B cell (primary cell): ENCODE measurements at regions of chr7 and their contacts with region 1.

Region 1: GRCh38 chr7:90595801-90596671 is at the start of gene CDK14:
- DNase-seq: peak; percentile 93
- ATAC-seq: peak; percentile 68
- H3K4me3 ChIP-seq: peak within 1 kb of the TSS; percentile 72 to 91 (median 84)
- H3K4me3 Mint-ChIP-seq: peak within 1 kb of the TSS; percentile 100
- H3K27ac ChIP-seq: peak within 1 kb of the TSS; percentile 79 to 93
- H3K27ac Mint-ChIP-seq: peak within 1 kb of the TSS; percentile 99
- H3K4me1 ChIP-seq: peaks cover 40 to 45% of the 10 kb centered on the region in 2 donors
- H3K4me1 Mint-ChIP-seq: peaks cover 58% of the 10 kb centered on the region
- H3K27me3 ChIP-seq: no peaks in the 10 kb centered on the region
- H3K27me3 Mint-ChIP-seq: no peaks in the 10 kb centered on the region
- CTCF ChIP-seq: peak; percentile 71
- total RNA-seq, gene CDK14: 167 and 174 TPM in 2 replicates

Region 2: DNA sequence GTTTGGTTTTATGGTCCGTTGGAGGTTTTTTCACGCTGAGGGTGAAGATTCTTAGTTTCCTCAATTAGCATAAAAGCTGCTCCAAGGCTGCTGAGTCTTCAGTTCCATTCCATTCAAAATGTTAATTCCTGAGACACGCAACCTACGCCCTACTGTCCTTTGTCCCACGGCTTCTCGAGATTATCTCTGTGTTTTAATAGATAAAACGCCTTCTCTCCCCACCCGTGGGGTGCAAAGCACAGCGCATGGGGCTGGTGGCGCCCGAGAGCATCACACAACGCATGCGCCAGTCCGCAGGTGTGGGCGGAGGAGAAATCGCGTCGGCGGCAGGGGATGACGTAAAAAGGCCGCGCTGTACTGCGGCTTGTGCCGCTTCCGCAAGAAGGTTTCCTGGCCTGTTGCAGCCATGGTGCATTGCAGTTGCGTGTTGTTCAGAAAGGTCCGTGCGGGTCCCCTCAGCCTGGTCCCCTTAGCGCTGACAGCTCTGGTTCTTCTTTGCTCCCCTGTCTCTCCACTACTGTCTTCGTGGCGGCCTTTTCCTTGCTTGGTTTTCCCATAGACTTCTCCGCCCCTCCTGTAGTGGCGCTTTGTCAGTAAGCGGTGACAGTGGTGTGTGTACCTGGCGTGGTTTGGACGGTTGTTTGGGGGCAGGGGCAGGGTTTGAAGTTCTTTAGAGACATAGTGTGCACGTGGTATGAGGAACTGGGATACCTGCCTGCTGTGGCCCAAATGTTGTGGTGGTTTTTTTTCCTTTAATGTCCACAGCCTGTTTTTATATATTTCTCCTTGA is 249.5 kb before region 1 on chr7 and contains the start of gene GTPBP10:
- CTCF ChIA-PET with region 1: no interaction called
- POLR2A ChIA-PET with region 1: no interaction called
- intact Hi-C with region 1: loop called (anchors 5 kb)
- DNase-seq: peak; percentile 98
- ATAC-seq: peak; percentile 94
- H3K4me3 ChIP-seq: peak within 1 kb of the TSS; percentile 67 to 93 (median 86)
- H3K4me3 Mint-ChIP-seq: peak within 1 kb of the TSS; percentile 99
- H3K27ac ChIP-seq: peak within 1 kb of the TSS; percentile 95 to 96
- H3K27ac Mint-ChIP-seq: peak within 1 kb of the TSS; percentile 99
- H3K4me1 ChIP-seq: peaks cover 14 to 17% of the 10 kb centered on the region in 2 donors
- H3K4me1 Mint-ChIP-seq: peaks cover 49% of the 10 kb centered on the region
- H3K27me3 ChIP-seq: no peaks in the 10 kb centered on the region
- H3K27me3 Mint-ChIP-seq: no peaks in the 10 kb centered on the region
- CTCF ChIP-seq: peak; percentile 76
- total RNA-seq, gene GTPBP10: 36.2 and 39.5 TPM in 2 replicates

Region 3: GRCh38 chr7:90455163-90456030 is 140.6 kb before region 1 on chr7:
- CTCF ChIA-PET with region 1: interaction called, 13 read pairs
- POLR2A ChIA-PET with region 1: no interaction called
- intact Hi-C with region 1: loop called (anchors 1 kb)
- DNase-seq: peak; percentile 67
- ATAC-seq: peak; percentile 74
- H3K4me3 ChIP-seq: peak overlapping the region in 1 of 5 experiments; percentile 23
- H3K4me3 Mint-ChIP-seq: peak overlapping the region; percentile 69
- H3K27ac ChIP-seq: no peak overlapping the region
- H3K27ac Mint-ChIP-seq: peak overlapping the region; percentile 48
- H3K4me1 ChIP-seq: peaks cover 5 to 8% of the 10 kb centered on the region in 2 donors
- H3K4me1 Mint-ChIP-seq: peaks cover 7% of the 10 kb centered on the region
- H3K27me3 ChIP-seq: peaks cover 0 to 3% (median 0%) of the 10 kb centered on the region in 4 experiments
- H3K27me3 Mint-ChIP-seq: peaks cover 10% of the 10 kb centered on the region
- CTCF ChIP-seq: peak; percentile 83

Region 4: GRCh38 chr7:90613088-90613498 is 17.1 kb after region 1 on chr7:
- CTCF ChIA-PET with region 1: interaction called, 7 read pairs
- POLR2A ChIA-PET with region 1: interaction called, 3 read pairs
- intact Hi-C with region 1: loop called (anchors 1 kb)
- DNase-seq: peak; percentile 39
- ATAC-seq: peak; percentile 88
- H3K4me3 ChIP-seq: peak overlapping the region in 3 of 5 experiments; percentile 5 to 13 (median 13)
- H3K4me3 Mint-ChIP-seq: peak overlapping the region; percentile 50
- H3K27ac ChIP-seq: peak overlapping the region in 1 of 2 donors; percentile 66
- H3K27ac Mint-ChIP-seq: peak overlapping the region; percentile 87
- H3K4me1 ChIP-seq: peaks cover 10 to 15% of the 10 kb centered on the region in 2 donors
- H3K4me1 Mint-ChIP-seq: peaks cover 37% of the 10 kb centered on the region
- H3K27me3 ChIP-seq: no peaks in the 10 kb centered on the region
- H3K27me3 Mint-ChIP-seq: no peaks in the 10 kb centered on the region
- CTCF ChIP-seq: no peak

Region 5: GRCh38 chr7:91034459-91035368 is 438.7 kb after region 1 on chr7:
- CTCF ChIA-PET with region 1: interaction called, 18 read pairs
- POLR2A ChIA-PET with region 1: no interaction called
- intact Hi-C with region 1: no loop called
- DNase-seq: peak; percentile 56
- ATAC-seq: no peak
- H3K4me3 ChIP-seq: no peak overlapping the region
- H3K4me3 Mint-ChIP-seq: no peak overlapping the region
- H3K27ac ChIP-seq: no peak overlapping the region
- H3K27ac Mint-ChIP-seq: no peak overlapping the region
- H3K4me1 ChIP-seq: no peaks in the 10 kb centered on the region
- H3K4me1 Mint-ChIP-seq: peaks cover 6% of the 10 kb centered on the region
- H3K27me3 ChIP-seq: no peaks in the 10 kb centered on the region
- H3K27me3 Mint-ChIP-seq: no peaks in the 10 kb centered on the region
- CTCF ChIP-seq: peak; percentile 68